ENCODE measurements at regions of chr20 and their contacts with region 1.

Region 1: GRCh38 chr20:54649511-54649962 is 174.1 kb downstream of the DOK5 start:
- DNase-seq: peak; percentile 56 to 81 (median 68)
- ATAC-seq: peak in 3 of 4 donors; percentile 67 to 78 (median 74)
- H3K4me3 ChIP-seq: no peak overlapping the region
- H3K27ac ChIP-seq: no peak overlapping the region
- H3K4me1 ChIP-seq: peaks cover 0 to 7% (median 0%) of the 10 kb centered on the region in 12 donors
- H3K27me3 ChIP-seq: no peaks in the 10 kb centered on the region
- CTCF ChIP-seq: peak; percentile 64 to 87 (median 75)
- POLR2A ChIP-seq: no peak

Region 2: GRCh38 chr20:54103067-54103761 is 546.3 kb before region 1 on chr20:
- intact Hi-C with region 1: loop called in 5 of 10 experiments (anchors 5 kb)
- DNase-seq: peak; percentile 55 to 81 (median 57)
- ATAC-seq: peak in 2 of 4 donors; percentile 54 to 60
- H3K4me3 ChIP-seq: no peak overlapping the region
- H3K27ac ChIP-seq: no peak overlapping the region
- H3K4me1 ChIP-seq: peaks cover 0 to 7% (median 0%) of the 10 kb centered on the region in 12 donors
- H3K27me3 ChIP-seq: peaks cover 0 to 9% (median 0%) of the 10 kb centered on the region in 9 donors
- CTCF ChIP-seq: peak; percentile 59 to 94 (median 81)
- POLR2A ChIP-seq: no peak

Region 3: DNA sequence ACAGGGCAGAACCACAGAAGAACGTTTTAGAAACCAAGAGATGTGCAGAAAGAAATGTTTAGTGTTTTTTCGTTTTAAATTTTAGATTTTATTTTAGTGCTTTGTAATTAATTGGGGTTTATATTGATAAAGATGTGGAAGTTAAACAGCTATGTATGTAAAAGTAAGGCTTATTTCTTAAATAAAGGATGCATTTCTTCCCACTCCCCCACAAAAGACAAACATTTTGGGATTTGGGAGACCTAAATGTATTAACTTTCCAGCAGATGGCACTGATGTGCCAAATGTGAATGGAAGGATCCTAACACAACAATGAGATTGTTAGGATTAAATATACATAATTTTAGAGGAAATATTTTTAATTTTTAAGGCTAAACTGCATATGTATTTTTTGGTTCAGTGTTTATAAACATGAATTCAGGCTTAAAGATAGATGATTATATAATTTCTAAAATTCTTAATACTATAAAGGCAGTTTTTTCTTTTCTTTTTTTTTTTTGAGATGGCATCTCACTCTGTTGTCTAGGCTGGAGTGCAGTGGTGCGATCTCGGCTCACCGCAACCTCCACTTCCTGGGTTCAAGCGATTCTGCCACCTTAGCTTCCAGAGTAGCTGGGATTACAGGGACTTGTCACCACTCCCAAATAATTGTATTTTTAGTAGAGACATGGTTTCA is 429.6 kb before region 1 on chr20:
- intact Hi-C with region 1: loop called (anchors 1 to 5 kb)
- DNase-seq: no peak
- ATAC-seq: no peak
- H3K4me3 ChIP-seq: no peak overlapping the region
- H3K27ac ChIP-seq: no peak overlapping the region
- H3K4me1 ChIP-seq: peaks cover 0 to 32% (median 16%) of the 10 kb centered on the region in 12 donors
- H3K27me3 ChIP-seq: no peaks in the 10 kb centered on the region
- CTCF ChIP-seq: peak; percentile 20 to 73 (median 54)
- POLR2A ChIP-seq: no peak

Region 4: GRCh38 chr20:54456971-54457370 is 192.6 kb before region 1 on chr20:
- intact Hi-C with region 1: loop called in 2 of 10 experiments (anchors 5 kb)
- DNase-seq: no peak
- ATAC-seq: no peak
- H3K4me3 ChIP-seq: no peak overlapping the region
- H3K27ac ChIP-seq: no peak overlapping the region
- H3K4me1 ChIP-seq: no peaks in the 10 kb centered on the region
- H3K27me3 ChIP-seq: no peaks in the 10 kb centered on the region
- CTCF ChIP-seq: peak in 5 of 12 donors; percentile 12 to 39 (median 28)
- POLR2A ChIP-seq: no peak

Measured in heart left ventricle (tissue), 16 donors.